ENCODE measurements at regions of chr6 and their contacts with region 1.

Region 1: DNA sequence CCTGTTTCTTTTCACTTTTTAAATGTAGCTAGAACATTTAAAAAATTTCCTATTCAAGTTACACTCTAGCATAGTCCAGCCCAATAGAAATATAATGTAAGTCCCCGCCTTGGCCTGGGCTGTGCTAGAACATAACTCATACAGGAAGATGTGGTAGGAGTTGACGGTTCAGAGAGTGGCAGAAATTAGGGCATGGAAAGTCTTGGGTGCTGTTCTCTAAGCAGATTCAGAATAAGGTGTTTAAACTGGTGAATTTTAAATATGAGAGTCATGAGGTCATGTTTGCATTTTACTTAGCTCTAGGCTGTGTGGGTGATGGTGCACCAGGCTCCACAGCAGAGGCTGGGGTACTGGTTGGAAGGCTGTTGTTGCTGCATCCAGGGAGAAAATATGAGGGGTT is 256.5 kb downstream of the FARS2 start:
- DNase-seq: peak; percentile 64
- H3K4me3 Mint-ChIP-seq: no peak overlapping the region
- H3K27ac Mint-ChIP-seq: peak overlapping the region; percentile 73
- H3K4me1 Mint-ChIP-seq: peaks cover 57% of the 10 kb centered on the region
- H3K27me3 Mint-ChIP-seq: no peaks in the 10 kb centered on the region

Region 2: DNA sequence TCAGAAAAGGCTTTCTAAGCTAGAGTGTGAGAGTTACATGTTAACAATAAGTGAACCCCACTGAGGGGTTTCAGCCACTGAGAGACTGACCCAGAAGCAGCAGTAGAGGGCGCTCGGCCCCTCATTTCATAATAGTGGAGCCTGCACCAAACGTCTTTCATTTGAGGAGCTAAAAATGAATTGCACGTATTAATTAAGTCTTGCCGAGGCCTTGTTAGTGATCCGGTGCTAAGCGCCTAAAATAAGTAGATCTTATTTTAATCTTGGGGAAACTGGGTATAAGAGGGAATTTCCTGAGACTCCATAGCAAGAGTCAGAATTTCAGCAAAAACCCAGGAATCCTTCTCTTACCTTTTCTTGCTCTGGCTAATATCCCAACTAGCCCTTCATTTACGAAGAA is 46.8 kb before region 1 on chr6:
- CTCF ChIA-PET with region 1: interaction called, 11 read pairs
- POLR2A ChIA-PET with region 1: no interaction called
- intact Hi-C with region 1: no loop called
- DNase-seq: peak; percentile 70
- H3K4me3 Mint-ChIP-seq: no peak overlapping the region
- H3K27ac Mint-ChIP-seq: no peak overlapping the region
- H3K4me1 Mint-ChIP-seq: no peaks in the 10 kb centered on the region
- H3K27me3 Mint-ChIP-seq: no peaks in the 10 kb centered on the region

Region 3: GRCh38 chr6:5499644-5500306 is 18.0 kb before region 1 on chr6:
- CTCF ChIA-PET with region 1: interaction called, 4 read pairs
- POLR2A ChIA-PET with region 1: no interaction called
- intact Hi-C with region 1: loop called (anchors 1 kb)
- DNase-seq: no peak
- H3K4me3 Mint-ChIP-seq: no peak overlapping the region
- H3K27ac Mint-ChIP-seq: peak overlapping the region; percentile 79
- H3K4me1 Mint-ChIP-seq: peaks cover 29% of the 10 kb centered on the region
- H3K27me3 Mint-ChIP-seq: no peaks in the 10 kb centered on the region

Region 4: GRCh38 chr6:5584078-5584482 is 66.3 kb after region 1 on chr6:
- CTCF ChIA-PET with region 1: no interaction called
- POLR2A ChIA-PET with region 1: no interaction called
- intact Hi-C with region 1: no loop called
- DNase-seq: no peak
- H3K4me3 Mint-ChIP-seq: no peak overlapping the region
- H3K27ac Mint-ChIP-seq: no peak overlapping the region
- H3K4me1 Mint-ChIP-seq: peaks cover 4% of the 10 kb centered on the region
- H3K27me3 Mint-ChIP-seq: no peaks in the 10 kb centered on the region

Region 5: DNA sequence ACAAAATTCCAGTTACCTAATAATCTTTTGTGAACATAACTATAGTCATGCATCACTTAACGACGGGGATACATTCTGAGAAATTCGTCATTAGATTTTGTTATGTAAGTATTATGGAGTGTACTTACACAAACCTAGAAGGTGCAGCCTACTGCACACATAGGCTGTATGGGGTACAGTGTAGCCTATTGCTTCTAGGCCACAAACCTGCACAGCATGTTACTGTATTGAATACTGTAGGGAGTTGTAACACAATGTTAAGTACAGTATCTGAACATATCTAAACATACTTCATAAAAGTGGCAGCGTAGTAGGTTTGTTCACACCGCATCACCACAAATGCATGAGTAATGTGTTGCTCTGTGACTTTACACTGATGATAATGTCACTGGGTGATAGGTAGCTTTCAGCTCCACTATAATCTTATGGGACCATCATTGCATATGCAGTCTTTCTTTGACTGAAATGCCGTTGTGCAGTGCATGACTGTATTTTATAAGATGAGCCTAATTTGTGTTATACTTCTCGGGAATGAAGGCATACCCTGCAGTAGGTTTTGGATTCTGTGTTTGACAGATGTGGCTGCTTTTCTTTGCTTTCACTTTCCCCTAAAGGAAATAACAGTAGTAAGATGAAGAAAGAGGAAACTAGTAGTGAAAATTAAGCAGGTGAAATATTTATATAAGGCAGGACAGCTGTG is 109.1 kb after region 1 on chr6:
- CTCF ChIA-PET with region 1: no interaction called
- POLR2A ChIA-PET with region 1: no interaction called
- intact Hi-C with region 1: loop called (anchors 2 kb)
- DNase-seq: peak; percentile 37
- H3K4me3 Mint-ChIP-seq: no peak overlapping the region
- H3K27ac Mint-ChIP-seq: no peak overlapping the region
- H3K4me1 Mint-ChIP-seq: peaks cover 20% of the 10 kb centered on the region
- H3K27me3 Mint-ChIP-seq: no peaks in the 10 kb centered on the region

Measured in activated CD4-positive, alpha-beta memory T cell treated with anti-CD3 and anti-CD28 coated beads for 36 hours (primary cell).